RWPE1 (cell line): ENCODE measurements at regions of chr6 and their contacts with region 1.

Region 1: GRCh38 chr6:158704181-158704822 is 54.4 kb downstream of the SYTL3 start:
- DNase-seq: peak; percentile 82
- H3K27ac ChIP-seq: peak overlapping the region; percentile 49
- CTCF ChIP-seq: peak; percentile 99

Region 2: DNA sequence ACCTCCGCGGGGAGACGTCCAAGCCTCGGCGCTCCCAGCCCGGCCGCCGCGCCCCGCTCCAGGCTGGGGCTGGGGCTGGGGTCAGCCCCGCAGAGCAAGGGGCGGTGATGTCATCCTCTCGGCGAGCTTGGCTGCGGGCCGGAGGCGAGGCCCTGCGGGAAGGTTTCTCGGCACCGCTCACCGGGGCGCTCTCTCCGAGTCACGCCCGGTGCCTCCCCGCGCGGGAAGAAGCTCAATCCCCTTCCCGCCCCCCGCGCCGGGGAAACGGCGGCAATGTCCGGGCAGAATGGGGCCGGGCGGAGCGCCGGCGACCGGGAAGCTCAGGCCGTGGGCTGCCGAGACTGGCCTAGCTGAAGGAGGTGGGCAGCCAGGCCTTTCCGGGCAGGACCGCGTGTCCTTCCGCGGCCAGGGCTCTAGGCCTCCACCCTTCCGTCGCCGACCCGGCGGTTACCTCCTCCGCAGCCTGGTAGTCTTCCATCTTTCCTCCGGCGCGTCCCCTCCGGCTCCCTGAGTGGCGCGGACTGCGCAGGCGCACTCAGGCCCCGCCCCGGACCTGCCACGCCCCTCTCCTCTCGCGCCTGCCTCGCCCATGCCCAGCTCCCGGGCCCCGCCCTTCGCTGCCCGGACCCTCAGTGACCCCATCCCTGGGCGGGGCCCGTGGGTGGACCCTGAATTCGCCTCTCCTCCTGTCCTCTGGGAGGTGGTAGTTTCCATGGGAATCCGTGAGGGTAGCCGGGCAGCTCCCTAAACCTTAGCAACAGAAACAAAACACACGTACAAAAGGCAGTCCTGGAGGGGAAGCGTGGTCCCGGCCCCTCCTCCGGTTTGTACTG is 59.9 kb before region 1 on chr6 and contains the start of gene DYNLT1:
- CTCF ChIA-PET with region 1: no interaction called
- POLR2A ChIA-PET with region 1: no interaction called
- DNase-seq: peak; percentile 95
- H3K27ac ChIP-seq: peak within 1 kb of the TSS; percentile 87
- CTCF ChIP-seq: no peak

Region 3: GRCh38 chr6:158737710-158738615 is 33.7 kb after region 1 on chr6:
- CTCF ChIA-PET with region 1: interaction called, 10 read pairs
- POLR2A ChIA-PET with region 1: no interaction called
- DNase-seq: peak; percentile 82
- H3K27ac ChIP-seq: peak overlapping the region; percentile 89
- CTCF ChIP-seq: no peak

Region 4: DNA sequence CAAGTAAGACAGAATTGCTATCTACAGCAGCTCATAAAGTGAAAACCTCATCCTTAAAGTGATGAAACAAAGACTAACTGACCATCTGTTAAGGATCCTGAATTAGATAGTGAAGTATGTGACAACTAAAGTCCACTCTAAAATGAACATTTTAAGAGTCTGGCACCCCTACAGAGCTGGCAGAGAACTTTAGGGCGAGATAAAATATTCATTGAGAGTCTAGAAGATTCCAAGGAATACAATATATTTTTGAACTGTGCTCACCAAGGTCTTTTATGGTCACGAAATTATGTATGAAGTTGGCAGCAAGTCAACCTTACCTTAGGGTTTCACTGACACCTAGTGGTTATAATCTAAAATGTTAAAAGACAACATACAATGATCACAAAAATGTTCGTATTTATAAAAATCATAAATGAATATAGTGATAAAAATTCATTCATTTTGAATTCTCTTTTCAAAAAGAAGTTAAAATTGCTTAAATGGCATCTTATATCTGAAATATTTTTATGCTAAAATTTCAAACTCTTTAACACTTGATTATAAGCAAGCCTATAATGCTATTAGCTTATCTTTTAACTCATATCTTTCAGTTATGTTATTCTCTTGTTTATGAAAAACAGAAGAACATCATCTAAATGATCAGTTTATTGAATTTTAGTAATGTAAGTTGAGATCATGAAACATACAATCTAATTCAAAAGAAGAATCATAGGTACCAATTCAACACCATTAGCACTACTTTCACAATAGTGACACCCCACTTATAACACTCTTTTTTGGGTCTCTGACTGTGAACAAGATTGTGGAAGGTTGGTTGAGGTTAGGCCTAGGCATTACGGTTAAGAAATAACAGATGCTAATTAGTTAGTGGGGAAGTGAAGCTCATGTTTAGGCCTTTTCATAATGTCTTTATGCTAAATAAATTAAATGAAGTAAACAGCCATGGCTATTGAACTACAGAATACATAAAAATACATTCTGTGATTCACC is 268.2 kb after region 1 on chr6:
- CTCF ChIA-PET with region 1: interaction called, 16 read pairs
- POLR2A ChIA-PET with region 1: no interaction called
- DNase-seq: peak; percentile 53
- H3K27ac ChIP-seq: no peak overlapping the region
- CTCF ChIP-seq: peak; percentile 56

Region 5: DNA sequence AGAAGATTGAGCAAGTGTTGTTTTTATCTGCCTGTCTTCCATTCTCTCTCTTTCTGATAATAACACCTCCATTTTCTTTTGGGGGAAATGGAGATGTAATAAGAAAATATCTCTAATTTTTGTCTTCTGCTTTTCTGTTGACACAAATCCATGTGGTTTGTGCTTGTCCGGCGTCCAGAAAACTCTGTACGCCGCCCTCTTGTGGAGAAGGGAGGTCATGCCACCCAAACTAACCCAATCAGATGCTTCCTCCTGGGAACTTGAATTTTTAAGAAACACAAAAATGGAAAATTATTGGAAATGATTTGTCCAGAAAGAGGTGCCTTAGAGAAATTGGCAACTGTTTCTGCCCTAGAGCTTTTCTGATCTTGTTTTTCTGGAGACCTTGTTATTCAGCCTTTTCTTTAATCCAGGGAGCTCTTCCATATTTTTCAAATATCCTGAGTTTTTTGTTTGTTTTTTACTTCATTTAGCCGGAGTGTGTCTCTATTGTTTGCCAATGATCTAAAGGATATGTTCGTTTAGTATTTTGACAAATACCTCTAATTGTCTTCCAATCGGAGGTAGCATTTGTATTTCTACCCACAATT is 447.1 kb after region 1 on chr6:
- CTCF ChIA-PET with region 1: no interaction called
- POLR2A ChIA-PET with region 1: no interaction called
- DNase-seq: peak; percentile 56
- H3K27ac ChIP-seq: no peak overlapping the region
- CTCF ChIP-seq: peak; percentile 84